HEK293 (cell line): ENCODE measurements at regions of chr1 and their contacts with region 1.

Region 1: GRCh38 chr1:109773146-109773899 is 9.6 kb upstream of the EPS8L3 start:
- H3K4me3 ChIP-seq: no peak overlapping the region
- H3K27ac ChIP-seq: no peak overlapping the region
- H3K4me1 ChIP-seq: no peaks in the 10 kb centered on the region
- CTCF ChIP-seq: peak; percentile 81; the same call in 1 of the 2 replicates

Region 2: GRCh38 chr1:109649491-109649914 is 123.8 kb before region 1 on chr1:
- CTCF ChIA-PET with region 1: interaction called, 345 read pairs
- POLR2A ChIA-PET with region 1: no interaction called
- H3K4me3 ChIP-seq: no peak overlapping the region
- H3K27ac ChIP-seq: no peak overlapping the region
- H3K4me1 ChIP-seq: no peaks in the 10 kb centered on the region
- CTCF ChIP-seq: no peak

Region 3: GRCh38 chr1:109718491-109718890 is 54.8 kb before region 1 on chr1:
- CTCF ChIA-PET with region 1: interaction called, 11 read pairs
- POLR2A ChIA-PET with region 1: no interaction called
- H3K4me3 ChIP-seq: no peak overlapping the region
- H3K27ac ChIP-seq: no peak overlapping the region
- H3K4me1 ChIP-seq: no peaks in the 10 kb centered on the region
- CTCF ChIP-seq: peak; percentile 32

Region 4: GRCh38 chr1:109790735-109791494 is 17.6 kb after region 1 on chr1:
- CTCF ChIA-PET with region 1: interaction called, 68 read pairs
- POLR2A ChIA-PET with region 1: no interaction called
- H3K4me3 ChIP-seq: no peak overlapping the region
- H3K27ac ChIP-seq: no peak overlapping the region
- H3K4me1 ChIP-seq: peaks cover 3% of the 10 kb centered on the region; the same call in 1 of the 2 replicates
- CTCF ChIP-seq: peak; percentile 38; the same call in 1 of the 2 replicates

Region 5: GRCh38 chr1:109886827-109887226 is 113.5 kb after region 1 on chr1:
- CTCF ChIA-PET with region 1: no interaction called
- POLR2A ChIA-PET with region 1: no interaction called
- H3K4me3 ChIP-seq: no peak overlapping the region
- H3K27ac ChIP-seq: no peak overlapping the region
- H3K4me1 ChIP-seq: no peaks in the 10 kb centered on the region
- CTCF ChIP-seq: no peak

Region 6: DNA sequence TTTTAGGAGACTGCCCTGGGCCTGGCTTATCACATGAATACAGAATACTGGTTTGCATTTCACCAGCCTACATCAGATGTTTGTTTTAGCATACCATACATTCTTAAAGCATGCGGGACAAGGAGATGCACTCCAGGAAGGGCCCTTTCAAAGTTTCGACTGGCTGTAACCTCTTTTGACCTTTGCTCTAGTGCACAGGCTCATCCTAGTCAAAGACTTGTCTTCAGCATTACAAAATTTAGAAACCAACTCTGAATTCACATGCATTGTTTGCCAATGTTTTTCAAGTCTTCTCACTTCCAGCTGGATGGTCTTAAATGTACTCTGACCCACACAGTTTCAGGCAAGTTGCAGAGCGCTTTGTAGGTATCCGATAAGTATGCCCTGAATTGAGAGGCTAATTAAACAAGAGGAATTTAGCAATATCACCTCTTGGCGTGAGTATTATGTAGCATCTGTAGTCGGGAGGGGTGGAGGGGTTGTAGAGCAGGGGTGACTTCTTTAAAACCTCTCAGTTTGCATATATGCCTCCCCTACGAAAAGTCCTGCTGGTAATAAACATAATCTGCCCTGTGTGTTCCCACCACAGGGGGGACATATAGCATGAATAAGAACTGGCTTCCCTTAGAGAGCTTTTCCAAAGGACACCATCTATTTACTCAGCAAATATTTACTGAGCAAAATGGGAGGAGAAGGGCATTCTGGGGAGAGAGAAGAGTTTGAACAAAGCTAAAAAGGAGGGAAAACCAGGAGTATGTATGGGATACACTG is 186.8 kb after region 1 on chr1:
- CTCF ChIA-PET with region 1: interaction called, 16 read pairs
- POLR2A ChIA-PET with region 1: no interaction called
- H3K4me3 ChIP-seq: no peak overlapping the region
- H3K27ac ChIP-seq: no peak overlapping the region
- H3K4me1 ChIP-seq: peaks cover 3% of the 10 kb centered on the region; the same call in 1 of the 2 replicates
- CTCF ChIP-seq: no peak

Region 7: GRCh38 chr1:110011527-110012041 is 238.3 kb after region 1 on chr1:
- CTCF ChIA-PET with region 1: interaction called, 24 read pairs
- POLR2A ChIA-PET with region 1: no interaction called
- H3K4me3 ChIP-seq: no peak overlapping the region
- H3K27ac ChIP-seq: no peak overlapping the region
- H3K4me1 ChIP-seq: peaks cover 7% of the 10 kb centered on the region; the same call in 1 of the 2 replicates
- CTCF ChIP-seq: peak; percentile 42; the same call in 1 of the 2 replicates

Region 8: GRCh38 chr1:110594456-110595352 is 821.4 kb after region 1 on chr1:
- CTCF ChIA-PET with region 1: no interaction called
- POLR2A ChIA-PET with region 1: no interaction called
- H3K4me3 ChIP-seq: no peak overlapping the region
- H3K27ac ChIP-seq: no peak overlapping the region
- H3K4me1 ChIP-seq: no peaks in the 10 kb centered on the region
- CTCF ChIP-seq: no peak